ENCODE measurements at regions of chr10 and their contacts with region 1.

Region 1: GRCh38 chr10:114550756-114551635 is 107.1 kb downstream of the ABLIM1 start:
- DNase-seq: peak; percentile 83
- ATAC-seq: peak; percentile 62

Region 2: DNA sequence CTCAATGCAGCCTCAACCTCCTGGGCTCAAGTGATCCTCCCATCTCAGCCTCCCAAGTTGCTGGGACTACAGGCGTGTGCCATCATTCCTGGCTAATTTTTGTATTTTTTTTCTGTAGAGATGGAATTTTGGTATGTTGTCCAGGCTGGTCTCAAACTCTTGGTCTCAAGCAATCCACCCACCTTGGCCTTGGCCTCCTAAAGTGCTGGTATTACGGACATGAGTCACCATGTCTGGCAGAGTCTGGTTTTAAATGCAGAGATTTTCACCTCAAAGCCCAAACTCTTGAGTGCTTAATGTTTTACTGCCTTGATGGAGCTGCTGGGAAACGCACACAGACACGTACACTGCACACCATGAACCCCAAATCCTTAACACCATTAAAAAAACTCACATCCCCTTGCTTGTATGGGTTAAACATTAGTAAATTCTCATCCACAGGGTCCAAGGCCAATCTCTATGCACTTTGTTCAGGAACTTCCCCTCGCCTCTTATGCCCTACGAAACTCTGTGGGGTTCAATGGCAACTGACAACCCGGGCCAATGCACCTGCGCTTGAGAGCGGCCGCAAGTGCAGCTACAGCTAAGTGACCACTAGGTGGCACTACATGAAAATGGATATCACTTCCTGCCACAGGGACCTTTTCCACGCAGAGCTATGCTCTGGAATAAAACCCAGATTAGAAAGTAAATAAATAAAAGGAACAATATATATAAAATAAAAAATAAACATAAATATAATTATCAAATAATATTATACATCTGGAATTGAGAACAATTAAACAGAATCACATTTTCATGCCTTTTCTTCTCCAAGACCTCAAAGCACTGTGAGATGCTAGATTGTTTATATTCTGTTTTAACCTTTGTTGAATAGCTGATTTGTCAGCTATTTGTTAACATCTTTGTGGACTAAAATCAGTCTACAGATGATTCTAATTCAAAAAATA is 79.8 kb before region 1 on chr10:
- intact Hi-C with region 1: loop called (anchors 10 kb)
- DNase-seq: peak; percentile 78
- ATAC-seq: peak; percentile 90

Region 3: DNA sequence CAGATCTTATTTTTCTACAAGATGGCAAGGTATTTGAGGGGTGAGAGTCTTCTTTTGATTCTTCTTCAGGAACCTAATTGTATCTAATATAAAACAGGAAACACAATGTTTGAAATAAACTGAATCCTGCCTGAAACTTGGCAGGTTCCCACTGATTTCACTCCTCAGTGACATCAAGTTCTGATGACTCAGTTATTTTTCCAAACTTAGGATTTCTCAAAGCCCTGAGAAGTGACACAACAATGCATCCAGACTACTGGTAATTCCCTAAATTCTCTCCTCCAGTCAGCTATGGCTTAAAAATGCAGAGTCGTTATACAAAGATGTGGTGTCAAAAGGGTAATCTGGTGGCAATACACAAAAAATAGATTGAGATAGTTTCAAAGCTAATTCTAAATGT is 26.1 kb after region 1 on chr10:
- intact Hi-C with region 1: no loop called
- DNase-seq: no peak
- ATAC-seq: peak; percentile 78

Region 4: GRCh38 chr10:114714281-114714741 is 163.3 kb after region 1 on chr10:
- intact Hi-C with region 1: loop called (anchors 10 kb)
- DNase-seq: no peak
- ATAC-seq: peak; percentile 31

Region 5: GRCh38 chr10:114779803-114780609 is 229.0 kb after region 1 on chr10:
- intact Hi-C with region 1: loop called (anchors 10 kb)
- DNase-seq: no peak
- ATAC-seq: peak; percentile 46

Measured in sciatic nerve (tissue), 2 donors.